BJ (cell line): ENCODE measurements at regions of chr15 and their contacts with region 1.

Region 1: GRCh38 chr15:71048913-71049675 is 66.2 kb upstream of the THSD4 start:
- DNase-seq: peak; percentile 69
- H3K4me3 ChIP-seq: no peak overlapping the region
- H3K27me3 ChIP-seq: no peaks in the 10 kb centered on the region
- CTCF ChIP-seq: no peak

Region 2: DNA sequence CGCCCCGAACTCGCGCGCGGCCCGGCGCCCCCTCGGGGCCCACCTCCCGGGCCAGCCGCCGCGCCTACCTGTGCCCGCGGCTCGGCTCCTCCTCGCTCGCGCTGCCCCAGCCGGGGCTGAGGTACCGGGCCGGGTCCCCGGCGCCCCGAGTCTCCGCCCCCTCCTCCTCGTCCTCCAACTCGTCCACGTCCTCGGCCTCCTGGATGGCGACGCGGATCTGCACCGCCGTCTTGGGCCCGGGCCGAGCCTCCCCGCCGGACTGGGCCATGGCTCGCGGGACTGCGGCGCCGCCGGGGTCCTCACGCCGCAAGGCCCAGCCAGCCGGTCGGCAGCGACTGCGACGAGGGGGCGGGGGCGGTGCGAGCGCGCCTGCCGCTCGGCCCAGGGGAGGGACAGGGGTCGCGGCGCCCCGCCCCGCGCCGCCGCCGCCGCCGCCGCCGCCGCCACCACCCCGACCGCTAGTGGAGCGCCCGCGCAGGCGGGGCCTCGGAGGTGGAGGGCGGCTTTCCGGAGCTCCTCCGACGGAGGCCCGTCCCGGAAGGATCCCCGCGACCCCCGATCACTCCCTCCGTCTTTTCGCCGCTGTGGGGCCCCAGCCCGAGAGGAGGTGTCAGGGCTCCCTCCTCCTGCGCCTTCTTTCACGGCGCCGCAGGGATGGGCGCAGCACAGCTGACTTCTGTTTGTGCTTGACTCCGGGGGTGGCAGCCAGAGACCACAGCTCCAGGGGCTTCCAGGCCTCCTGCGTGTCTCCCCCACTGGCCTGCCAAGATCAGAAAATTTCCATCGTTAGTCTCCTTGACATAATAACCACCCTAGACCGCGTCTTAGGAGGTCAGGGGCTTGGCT is 195.1 kb before region 1 on chr15 and contains the start of gene LARP6:
- CTCF ChIA-PET with region 1: no interaction called
- POLR2A ChIA-PET with region 1: no interaction called
- DNase-seq: no peak
- H3K4me3 ChIP-seq: peak within 1 kb of the TSS; percentile 80
- H3K27me3 ChIP-seq: no peaks in the 10 kb centered on the region
- CTCF ChIP-seq: no peak
- polyA plus RNA-seq, gene LARP6: 108 and 135 TPM in 2 replicates

Region 3: DNA sequence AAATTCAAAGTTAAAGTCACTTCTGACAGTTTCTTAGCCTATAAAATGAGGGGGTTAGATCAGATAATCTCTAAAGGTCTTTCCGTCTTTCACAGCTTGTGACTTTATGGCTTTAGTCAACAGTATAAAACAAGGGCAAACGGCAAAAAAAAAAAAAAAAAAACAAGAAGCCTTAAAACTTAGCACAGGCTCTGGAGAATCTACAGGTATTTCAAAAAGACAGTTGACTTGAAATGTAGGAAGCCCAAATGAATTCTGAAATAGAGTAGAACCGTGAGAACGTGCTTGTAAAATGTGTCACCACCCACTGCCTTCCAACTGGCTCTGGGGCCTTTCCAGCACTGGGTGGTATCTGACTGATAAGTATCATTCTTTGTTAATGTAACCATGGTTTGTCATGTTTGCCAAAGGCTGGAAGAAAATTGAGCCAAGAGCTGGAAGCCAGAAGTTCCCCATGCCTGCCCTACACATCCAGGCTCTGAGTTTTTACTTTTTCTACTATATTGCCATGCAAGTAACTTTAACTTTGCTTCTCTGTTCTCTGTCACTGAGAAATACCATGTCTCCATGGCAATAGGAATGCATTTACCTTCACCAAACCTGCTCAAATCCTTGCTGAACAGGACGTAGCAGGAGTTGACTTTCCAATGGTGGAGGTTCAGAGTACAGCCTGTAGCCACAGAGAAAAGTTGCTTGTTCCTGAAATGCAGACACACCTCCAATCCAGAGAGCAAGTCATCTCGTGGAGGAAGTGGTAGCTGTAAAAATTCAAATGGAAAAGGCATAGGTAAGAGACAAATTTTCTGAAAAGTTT is 30.3 kb after region 1 on chr15:
- CTCF ChIA-PET with region 1: interaction called, 5 read pairs
- POLR2A ChIA-PET with region 1: interaction called, 24 read pairs
- DNase-seq: peak; percentile 79
- H3K4me3 ChIP-seq: no peak overlapping the region
- H3K27me3 ChIP-seq: no peaks in the 10 kb centered on the region
- CTCF ChIP-seq: no peak

Region 4: DNA sequence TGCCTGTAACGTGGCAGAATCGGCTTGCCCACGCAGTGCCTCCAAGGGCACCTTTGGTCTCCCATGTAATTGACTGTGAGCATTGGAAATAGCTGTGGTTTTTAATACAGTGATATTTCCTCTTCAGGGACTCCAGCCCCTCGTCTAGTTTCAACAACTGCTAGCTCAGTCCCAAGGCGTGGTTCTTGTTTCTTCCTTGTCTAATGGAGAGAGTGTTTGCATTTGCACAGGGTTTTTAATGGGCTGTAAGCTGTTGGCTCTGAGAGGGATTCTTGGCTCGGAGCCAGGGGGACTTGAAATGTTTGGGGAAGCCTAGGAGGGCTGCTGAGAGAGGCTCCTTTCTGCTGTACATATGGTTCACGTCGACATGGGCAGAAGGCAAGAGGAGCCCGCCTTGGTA is 152.4 kb after region 1 on chr15:
- CTCF ChIA-PET with region 1: no interaction called
- POLR2A ChIA-PET with region 1: no interaction called
- DNase-seq: no peak
- H3K4me3 ChIP-seq: no peak overlapping the region
- H3K27me3 ChIP-seq: no peaks in the 10 kb centered on the region
- CTCF ChIP-seq: no peak

Region 5: DNA sequence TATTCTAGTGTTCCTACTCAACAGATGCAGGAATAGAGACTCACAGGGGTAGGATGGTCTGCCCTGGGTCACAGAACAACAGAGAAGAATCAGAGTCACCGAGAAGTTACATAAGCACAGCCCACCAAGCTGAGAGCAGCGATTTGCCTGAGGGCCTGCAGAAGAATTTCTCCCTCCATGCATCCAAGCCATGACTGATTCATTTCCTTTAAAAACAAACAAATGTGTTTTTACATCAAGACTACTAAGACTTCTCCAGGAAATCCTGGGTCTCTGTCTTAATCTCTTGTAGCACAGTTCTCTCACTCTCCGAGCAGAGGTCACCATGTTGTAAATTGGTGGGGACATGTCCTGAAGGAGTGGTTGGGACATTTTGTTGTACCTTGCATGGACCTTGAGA is 226.0 kb after region 1 on chr15:
- CTCF ChIA-PET with region 1: no interaction called
- POLR2A ChIA-PET with region 1: no interaction called
- DNase-seq: peak; percentile 85
- H3K4me3 ChIP-seq: no peak overlapping the region
- H3K27me3 ChIP-seq: no peaks in the 10 kb centered on the region
- CTCF ChIP-seq: no peak

Region 6: DNA sequence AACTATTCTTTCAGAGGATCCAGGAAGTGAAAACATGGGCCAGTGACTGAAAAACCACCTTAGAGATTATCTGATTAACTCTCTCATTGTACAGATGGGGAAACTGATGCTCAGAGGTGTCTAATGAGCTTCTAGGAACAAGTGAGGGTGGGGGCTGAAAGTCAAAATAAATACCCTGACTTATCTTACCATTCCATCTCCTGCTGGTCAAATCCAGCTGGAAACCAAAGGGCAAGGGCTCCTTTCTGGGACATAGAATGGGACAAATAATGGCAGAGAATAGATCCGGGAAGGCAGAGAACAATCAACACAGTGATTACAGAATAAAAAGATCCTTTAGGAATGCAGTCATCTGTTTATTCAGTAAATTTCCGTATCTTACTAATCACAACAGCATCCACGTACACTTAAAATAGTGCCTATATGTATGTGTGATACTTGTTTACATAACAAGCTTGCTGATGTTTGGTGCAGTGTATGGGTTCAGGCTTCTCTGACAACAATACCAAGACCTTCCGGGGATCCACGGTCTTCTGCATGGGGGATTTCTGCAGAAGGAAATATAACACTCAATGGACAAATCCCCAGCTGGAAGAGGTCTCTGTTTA is 239.4 kb after region 1 on chr15:
- CTCF ChIA-PET with region 1: no interaction called
- POLR2A ChIA-PET with region 1: no interaction called
- DNase-seq: no peak
- H3K4me3 ChIP-seq: no peak overlapping the region
- H3K27me3 ChIP-seq: no peaks in the 10 kb centered on the region
- CTCF ChIP-seq: no peak